ENCODE measurements at regions of chr16 and their contacts with region 1.

Region 1: DNA sequence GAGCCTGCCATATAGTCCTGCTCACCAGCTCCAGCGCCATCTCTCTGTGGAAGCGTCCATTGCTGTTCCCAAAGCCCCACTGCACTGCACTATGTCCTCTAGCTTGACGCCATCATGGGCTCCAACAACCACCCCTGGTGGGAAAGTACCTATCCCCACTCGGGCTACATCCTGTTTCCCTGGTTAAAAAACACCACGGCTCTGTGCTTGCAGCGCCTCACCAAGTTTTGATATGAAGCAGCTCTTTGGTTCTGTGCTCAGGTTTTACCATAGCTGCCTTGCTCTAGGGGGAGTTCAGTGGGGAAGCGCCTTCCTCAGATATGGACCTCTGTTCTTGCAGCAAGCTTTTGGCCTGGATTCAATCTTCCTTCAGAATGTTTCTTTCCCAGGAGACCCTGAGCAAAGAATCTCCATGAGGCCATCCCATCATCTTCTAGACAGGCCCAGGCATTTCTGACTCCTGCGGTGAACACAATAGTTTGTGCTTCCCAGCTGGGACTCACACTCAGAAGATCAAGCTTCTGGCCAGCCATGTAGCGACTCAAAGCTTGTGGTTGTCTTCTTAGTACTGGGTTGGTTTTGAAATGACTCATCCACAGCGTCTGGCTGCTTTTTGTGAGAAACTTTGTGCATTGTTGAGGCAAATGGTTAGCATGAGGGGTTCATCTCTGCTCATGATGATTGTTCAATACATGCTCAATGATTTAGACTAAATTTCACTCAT is 39.5 kb downstream of the DYNLRB2 start:
- DNase-seq: peak; percentile 82
- H3K4me3 Mint-ChIP-seq: peak overlapping the region; percentile 81
- H3K27ac Mint-ChIP-seq: peak overlapping the region; percentile 100
- H3K4me1 Mint-ChIP-seq: peaks cover 55% of the 10 kb centered on the region
- H3K27me3 Mint-ChIP-seq: no peaks in the 10 kb centered on the region

Region 2: DNA sequence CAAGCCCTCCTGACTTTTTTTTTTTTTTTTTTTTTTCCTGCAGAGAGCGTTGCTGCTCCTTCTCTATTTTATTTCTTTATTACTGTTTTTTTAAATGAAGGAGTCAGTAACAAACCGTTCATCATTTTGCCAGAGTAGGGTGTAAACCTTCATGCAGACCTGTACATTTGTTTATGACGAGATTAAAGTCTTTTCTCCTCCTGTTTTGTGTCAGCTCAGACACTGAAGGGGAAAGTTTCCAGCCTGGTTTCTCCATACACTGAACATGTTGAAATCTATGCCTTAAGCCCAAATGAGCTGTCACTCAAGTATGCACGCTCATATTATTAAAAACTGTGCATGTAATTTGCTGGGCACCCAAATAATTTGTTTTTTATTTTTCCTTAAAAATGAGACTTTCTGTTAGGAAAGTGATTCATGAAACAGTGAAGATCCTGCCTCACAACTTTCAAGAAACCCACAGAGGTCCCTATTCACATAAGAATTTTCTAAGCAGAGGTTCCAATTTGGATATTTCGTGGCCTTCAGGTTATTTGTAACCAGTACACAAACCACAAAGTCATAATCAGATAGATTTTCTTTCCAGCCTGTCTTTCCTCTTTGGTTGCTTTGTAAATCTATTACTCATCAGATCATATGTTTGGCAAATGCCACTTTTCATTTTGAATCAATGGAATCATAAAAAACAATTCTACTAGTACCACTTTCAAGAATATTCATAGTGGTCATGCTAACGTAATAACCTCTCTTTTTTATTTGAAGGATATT is 1680.0 kb before region 1 on chr16:
- intact Hi-C with region 1: loop called (anchors 5 kb)
- DNase-seq: no peak
- H3K4me3 Mint-ChIP-seq: no peak overlapping the region
- H3K27ac Mint-ChIP-seq: peak overlapping the region; percentile 51
- H3K4me1 Mint-ChIP-seq: peaks cover 42% of the 10 kb centered on the region
- H3K27me3 Mint-ChIP-seq: no peaks in the 10 kb centered on the region

Region 3: DNA sequence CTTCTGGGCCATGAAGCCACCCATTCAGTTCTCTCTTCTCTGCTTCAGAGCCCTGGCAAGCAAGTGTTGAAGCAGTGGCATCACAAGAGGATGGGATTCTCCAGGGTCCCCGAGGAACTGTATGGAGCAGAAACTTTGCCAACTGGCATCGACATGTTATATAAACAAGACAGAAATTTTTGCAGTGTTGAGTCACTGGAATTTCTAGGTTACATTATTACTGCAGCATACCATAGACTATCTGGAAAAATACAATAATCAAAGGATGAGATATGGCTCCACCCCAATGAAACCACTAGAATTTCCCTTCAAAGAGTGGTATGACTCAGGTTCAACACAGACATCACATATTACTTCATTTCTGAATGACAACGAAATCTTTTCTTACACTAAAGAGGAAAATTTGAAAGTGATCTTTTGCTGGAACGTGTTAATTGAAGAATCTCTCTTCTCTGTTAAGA is 382.5 kb before region 1 on chr16:
- intact Hi-C with region 1: loop called (anchors 5 kb)
- DNase-seq: no peak
- H3K4me3 Mint-ChIP-seq: no peak overlapping the region
- H3K27ac Mint-ChIP-seq: peak overlapping the region; percentile 33
- H3K4me1 Mint-ChIP-seq: peaks cover 4% of the 10 kb centered on the region
- H3K27me3 Mint-ChIP-seq: no peaks in the 10 kb centered on the region

Region 4: GRCh38 chr16:80500526-80500925 is 79.7 kb before region 1 on chr16:
- intact Hi-C with region 1: no loop called
- DNase-seq: no peak
- H3K4me3 Mint-ChIP-seq: no peak overlapping the region
- H3K27ac Mint-ChIP-seq: no peak overlapping the region
- H3K4me1 Mint-ChIP-seq: no peaks in the 10 kb centered on the region
- H3K27me3 Mint-ChIP-seq: no peaks in the 10 kb centered on the region

Region 5: GRCh38 chr16:80605826-80606766 is 25.8 kb after region 1 on chr16:
- intact Hi-C with region 1: loop called (anchors 2 kb)
- DNase-seq: no peak
- H3K4me3 Mint-ChIP-seq: peak overlapping the region; percentile 28
- H3K27ac Mint-ChIP-seq: peak overlapping the region; percentile 68
- H3K4me1 Mint-ChIP-seq: peaks cover 44% of the 10 kb centered on the region
- H3K27me3 Mint-ChIP-seq: no peaks in the 10 kb centered on the region

Region 6: GRCh38 chr16:80739523-80739922 is 159.3 kb after region 1 on chr16:
- intact Hi-C with region 1: loop called (anchors 2 kb)
- DNase-seq: no peak
- H3K4me3 Mint-ChIP-seq: no peak overlapping the region
- H3K27ac Mint-ChIP-seq: peak overlapping the region; percentile 74
- H3K4me1 Mint-ChIP-seq: peaks cover 61% of the 10 kb centered on the region
- H3K27me3 Mint-ChIP-seq: no peaks in the 10 kb centered on the region

Region 7: GRCh38 chr16:80948886-80949493 is 368.7 kb after region 1 on chr16:
- intact Hi-C with region 1: loop called (anchors 5 kb)
- DNase-seq: peak; percentile 17
- H3K4me3 Mint-ChIP-seq: no peak overlapping the region
- H3K27ac Mint-ChIP-seq: no peak overlapping the region
- H3K4me1 Mint-ChIP-seq: peaks cover 18% of the 10 kb centered on the region
- H3K27me3 Mint-ChIP-seq: peaks cover 6% of the 10 kb centered on the region